ENCODE measurements at regions of chr10 and their contacts with region 1.

Region 1: GRCh38 chr10:72273410-72274212 is at the start of gene DDIT4:
- DNase-seq: peak; percentile 100
- ATAC-seq: peak; percentile 88 to 93
- H3K4me3 ChIP-seq: peak within 1 kb of the TSS; percentile 68
- H3K27ac ChIP-seq: peak within 1 kb of the TSS; percentile 95
- H3K4me1 ChIP-seq: peaks cover 6% of the 10 kb centered on the region
- H3K27me3 ChIP-seq: no peaks in the 10 kb centered on the region
- total RNA-seq, gene DDIT4: 33.0 to 113 (median 76.5) TPM

Region 2: DNA sequence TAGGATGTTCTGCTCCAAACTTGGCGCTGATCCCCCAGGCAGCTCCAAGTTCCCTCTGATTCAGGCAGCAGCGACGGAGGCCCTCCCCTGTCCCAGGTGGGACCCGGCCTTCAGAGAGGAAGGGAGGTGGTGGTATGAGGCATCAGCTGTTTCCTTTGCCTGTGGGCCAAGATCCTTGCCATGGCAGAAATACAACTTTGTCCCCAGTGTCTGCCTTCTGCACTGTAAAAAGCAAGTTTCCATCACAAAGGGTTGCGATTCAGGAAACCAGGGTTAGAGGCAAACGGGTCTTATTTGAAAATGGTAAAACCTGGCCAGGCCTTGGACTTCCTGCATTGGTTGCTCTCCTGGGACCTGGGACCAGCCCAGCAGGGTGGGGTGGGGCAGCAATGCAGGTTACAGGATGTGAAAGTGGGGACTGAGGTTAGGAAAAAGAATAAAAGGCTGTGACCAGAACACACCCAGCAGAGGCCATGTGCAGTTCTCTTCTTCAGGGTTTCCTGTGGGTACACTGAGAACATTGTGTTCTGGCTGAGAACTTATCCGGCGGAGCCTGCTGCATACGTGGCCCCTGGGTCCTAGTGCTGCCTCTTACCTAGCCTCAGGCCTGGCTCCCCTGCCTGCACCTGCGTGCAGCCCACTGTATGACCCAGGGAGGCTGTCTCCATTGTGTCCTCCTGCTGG is 25.0 kb before region 1 on chr10:
- intact Hi-C with region 1: loop called in 1 of 4 experiments (anchors 2 kb)
- DNase-seq: peak; percentile 89 to 95 (median 92)
- ATAC-seq: peak; percentile 88 to 90
- H3K4me3 ChIP-seq: no peak overlapping the region
- H3K27ac ChIP-seq: peak overlapping the region; percentile 98
- H3K4me1 ChIP-seq: peaks cover 55% of the 10 kb centered on the region
- H3K27me3 ChIP-seq: no peaks in the 10 kb centered on the region

Region 3: GRCh38 chr10:72319416-72320254 is 46.0 kb after region 1 on chr10:
- intact Hi-C with region 1: loop called in 2 of 4 experiments (anchors 10 kb)
- DNase-seq: peak; percentile 96 to 99 (median 99)
- ATAC-seq: peak; percentile 87 to 90
- H3K4me3 ChIP-seq: peak overlapping the region; percentile 27
- H3K27ac ChIP-seq: peak overlapping the region; percentile 93
- H3K4me1 ChIP-seq: peaks cover 18% of the 10 kb centered on the region
- H3K27me3 ChIP-seq: no peaks in the 10 kb centered on the region